Cardiac septum (tissue), 1 donor: ENCODE measurements at regions of chr10 and their contacts with region 1.

Region 1: GRCh38 chr10:102009801-102010425 is 46.1 kb downstream of the ARMH3 start:
- DNase-seq: no peak

Region 2: GRCh38 chr10:101840741-101841453 is 169.0 kb before region 1 on chr10:
- intact Hi-C with region 1: loop called (anchors 2 kb)
- DNase-seq: peak; percentile 93

Region 3: DNA sequence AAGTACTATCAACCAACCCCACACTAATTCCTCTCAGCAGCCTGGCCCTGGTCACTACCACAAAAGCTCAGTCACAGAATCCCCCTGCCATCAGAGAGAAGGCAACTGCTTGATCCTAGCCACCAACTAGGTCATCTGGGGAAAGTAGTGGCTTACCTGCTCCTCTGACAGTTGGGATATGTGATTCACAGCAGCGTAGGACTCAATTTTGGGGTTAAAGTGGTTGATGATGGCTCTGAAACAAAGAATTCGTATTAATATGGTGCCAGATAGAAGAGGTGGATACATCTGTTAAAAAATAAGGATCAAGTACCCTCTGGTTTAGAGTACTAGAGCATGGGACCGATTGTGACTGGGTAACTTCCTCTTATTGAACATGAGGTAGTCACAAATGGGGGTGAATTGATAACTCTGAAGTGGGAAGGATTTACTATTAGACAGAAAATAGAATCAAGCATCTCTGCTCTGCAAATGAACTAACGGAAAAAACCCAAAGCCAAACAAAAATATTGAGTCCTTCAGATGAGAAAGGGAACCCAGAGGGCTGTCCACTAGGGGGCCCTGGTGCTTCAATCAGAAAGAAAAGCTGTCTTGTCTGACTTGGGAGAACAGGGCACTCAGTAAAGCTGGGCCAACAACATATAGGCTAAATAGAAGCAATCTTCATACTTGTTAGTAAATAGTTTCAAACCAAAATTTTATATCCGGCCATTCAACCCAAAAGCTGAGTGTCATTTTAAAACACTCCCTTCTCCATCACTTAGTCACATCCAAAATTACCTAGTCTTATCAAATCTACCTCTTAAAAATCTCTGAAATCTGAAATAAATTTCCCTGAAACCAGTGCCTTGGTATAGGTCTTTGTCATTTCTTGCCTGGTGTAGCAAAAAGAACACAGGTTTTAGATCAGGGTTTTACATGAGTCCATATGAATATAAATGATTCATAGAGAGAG is 120.4 kb before region 1 on chr10:
- intact Hi-C with region 1: loop called (anchors 2 kb)
- DNase-seq: no peak